CD4-positive, alpha-beta memory T cell (primary cell): ENCODE measurements at regions of chr19 and their contacts with region 1.

Region 1: DNA sequence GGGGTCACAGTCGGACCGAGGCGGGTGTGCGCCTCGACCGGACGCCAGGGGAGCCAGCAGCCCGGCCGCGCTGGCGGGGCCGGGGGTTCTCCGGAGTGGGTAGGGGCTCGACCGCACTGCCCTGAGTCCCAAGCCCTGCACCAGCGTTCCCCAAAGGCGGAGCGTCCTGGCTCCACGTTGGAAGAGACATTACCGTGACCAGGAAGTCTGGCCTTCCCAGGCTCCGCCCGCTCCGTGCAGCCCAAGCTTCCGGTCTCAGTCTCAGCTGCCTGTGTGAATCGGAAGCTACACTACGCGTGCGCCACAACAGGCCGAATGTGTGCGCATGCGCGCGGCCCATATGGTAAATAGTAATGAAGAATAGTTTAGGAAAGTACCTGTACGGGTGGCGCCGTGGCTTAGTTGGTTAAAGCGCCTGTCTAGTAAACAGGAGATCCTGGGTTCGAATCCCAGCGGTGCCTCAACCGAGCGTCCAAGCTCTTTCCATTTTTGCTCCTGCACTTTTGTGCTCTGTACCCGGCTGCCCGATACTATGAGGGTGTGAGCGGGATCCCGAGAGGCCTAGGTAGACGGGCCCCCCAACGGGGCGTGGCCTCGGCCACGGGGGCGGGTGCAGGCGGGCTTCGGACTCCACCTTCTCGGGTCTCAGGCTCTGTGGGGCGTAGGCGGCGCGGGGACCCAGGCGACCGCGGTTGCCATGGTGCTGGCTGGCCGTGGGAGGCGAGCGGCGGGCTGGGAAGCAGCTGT is 17.3 kb upstream of the LRP3 start:
- DNase-seq: peak; percentile 95 to 99 (median 98)
- H3K4me3 ChIP-seq: peak overlapping the region; percentile 71 to 76
- H3K4me3 Mint-ChIP-seq: peak overlapping the region; percentile 95 to 99 (median 98)
- H3K27ac ChIP-seq: peak overlapping the region; percentile 88
- H3K27ac Mint-ChIP-seq: peak overlapping the region; percentile 97 to 100 (median 99)
- H3K4me1 ChIP-seq: peaks cover 41% of the 10 kb centered on the region
- H3K4me1 Mint-ChIP-seq: peaks cover 23 to 60% (median 42%) of the 10 kb centered on the region in 4 donors
- H3K27me3 ChIP-seq: no peaks in the 10 kb centered on the region
- H3K27me3 Mint-ChIP-seq: peaks cover 0 to 4% of the 10 kb centered on the region in 2 donors

Region 2: DNA sequence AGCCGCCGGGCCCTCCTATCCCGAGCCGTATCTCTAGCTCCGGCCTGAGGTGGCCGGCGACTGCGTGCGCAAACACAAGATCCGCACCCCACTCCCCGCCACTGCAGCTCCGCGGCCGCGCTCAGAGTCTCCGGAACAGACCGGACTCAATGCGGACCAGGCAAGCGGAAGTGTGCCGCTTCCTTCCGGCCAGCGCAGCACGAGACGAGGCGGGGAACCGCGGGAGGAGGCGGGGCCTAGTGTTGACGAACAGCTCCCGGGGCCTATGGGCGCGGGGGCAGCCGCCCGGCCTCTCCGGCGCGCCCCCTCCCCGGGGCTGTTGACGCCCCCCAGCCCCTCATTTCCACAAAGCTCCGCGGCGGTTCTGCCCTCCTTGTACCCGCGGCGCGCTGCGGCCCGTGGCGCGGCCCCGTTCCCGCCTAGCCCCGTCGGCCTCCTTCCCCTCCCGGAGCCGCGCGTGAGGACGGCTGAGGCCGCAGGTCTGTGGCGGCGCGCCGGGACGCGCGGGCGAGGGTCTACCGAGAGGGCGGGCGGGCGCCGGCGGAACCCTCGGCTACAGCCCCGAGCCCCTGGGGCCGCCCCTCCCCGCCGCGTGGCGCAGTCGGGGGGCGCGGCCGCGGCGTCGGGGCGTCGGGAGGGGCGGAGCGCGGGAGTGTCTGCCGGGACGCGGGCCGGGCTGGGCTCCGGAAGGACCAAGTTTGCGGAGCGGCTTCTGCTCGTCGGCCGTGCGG is 771.2 kb before region 1 on chr19 and contains the start of gene DPY19L3:
- CTCF ChIA-PET with region 1: no interaction called
- POLR2A ChIA-PET with region 1: no interaction called
- intact Hi-C with region 1: loop called (anchors 2 kb)
- DNase-seq: peak; percentile 79 to 85 (median 83)
- H3K4me3 ChIP-seq: peak within 1 kb of the TSS; percentile 61 to 81
- H3K4me3 Mint-ChIP-seq: peak within 1 kb of the TSS; percentile 85 to 92 (median 88)
- H3K27ac ChIP-seq: peak within 1 kb of the TSS; percentile 50
- H3K27ac Mint-ChIP-seq: peak within 1 kb of the TSS; percentile 82 to 94 (median 90)
- H3K4me1 ChIP-seq: peaks cover 16% of the 10 kb centered on the region
- H3K4me1 Mint-ChIP-seq: peaks cover 5 to 19% (median 11%) of the 10 kb centered on the region in 4 donors
- H3K27me3 ChIP-seq: no peaks in the 10 kb centered on the region
- H3K27me3 Mint-ChIP-seq: no peaks in the 10 kb centered on the region
- total RNA-seq, gene DPY19L3: 16.9 to 17.9 TPM

Region 3: DNA sequence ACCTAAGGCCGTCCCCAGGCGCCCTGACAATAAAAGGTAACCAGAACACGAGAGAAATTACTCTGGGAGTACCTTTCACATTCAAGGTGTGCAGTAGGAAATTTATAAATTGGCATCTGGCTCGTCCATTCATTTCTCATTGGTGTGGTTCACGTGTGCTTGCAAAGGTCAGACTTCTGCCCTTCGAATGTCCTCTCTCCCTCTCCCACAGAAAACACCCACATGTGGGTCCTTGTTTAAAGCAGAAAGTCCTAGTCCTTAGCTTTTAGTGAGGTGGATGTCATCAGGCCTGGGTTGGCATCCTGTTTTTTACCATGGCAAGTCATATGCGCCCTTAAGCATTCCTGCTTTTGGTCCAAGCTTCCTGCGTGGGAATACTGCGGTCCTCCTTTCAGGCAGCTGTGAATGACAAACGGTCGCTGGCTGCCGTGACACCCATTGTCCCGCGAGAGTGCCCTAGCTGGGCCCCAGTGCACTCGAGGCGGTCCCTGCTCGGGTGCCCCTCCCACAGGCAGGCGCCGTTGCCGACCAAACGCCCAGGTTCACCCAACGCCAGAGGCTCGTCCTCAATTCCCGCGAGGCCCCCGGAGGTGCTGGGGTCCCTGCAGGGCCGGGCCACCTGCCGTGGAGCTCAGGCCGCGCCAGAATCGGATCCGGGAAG is 485.4 kb before region 1 on chr19 and contains the start of gene NUDT19:
- CTCF ChIA-PET with region 1: no interaction called
- POLR2A ChIA-PET with region 1: interaction called, 3 read pairs
- intact Hi-C with region 1: loop called (anchors 5 kb)
- DNase-seq: peak; percentile 68 to 79 (median 71)
- H3K4me3 ChIP-seq: peak within 1 kb of the TSS; percentile 85 to 89
- H3K4me3 Mint-ChIP-seq: peak within 1 kb of the TSS; percentile 91 to 94 (median 92)
- H3K27ac ChIP-seq: peak within 1 kb of the TSS; percentile 63
- H3K27ac Mint-ChIP-seq: peak within 1 kb of the TSS; percentile 80 to 96 (median 94)
- H3K4me1 ChIP-seq: peaks cover 45% of the 10 kb centered on the region
- H3K4me1 Mint-ChIP-seq: peaks cover 42 to 50% (median 45%) of the 10 kb centered on the region in 4 donors
- H3K27me3 ChIP-seq: no peaks in the 10 kb centered on the region
- H3K27me3 Mint-ChIP-seq: no peaks in the 10 kb centered on the region
- total RNA-seq, gene NUDT19: 10.5 to 10.6 TPM

Region 4: GRCh38 chr19:33080761-33081681 is 95.8 kb before region 1 on chr19 and contains the start of gene GPATCH1:
- CTCF ChIA-PET with region 1: no interaction called
- POLR2A ChIA-PET with region 1: interaction called, 10 read pairs
- intact Hi-C with region 1: no loop called
- DNase-seq: peak; percentile 83 to 89 (median 85)
- H3K4me3 ChIP-seq: peak within 1 kb of the TSS; percentile 72 to 98
- H3K4me3 Mint-ChIP-seq: peak within 1 kb of the TSS; percentile 92 to 99 (median 96)
- H3K27ac ChIP-seq: peak within 1 kb of the TSS; percentile 75
- H3K27ac Mint-ChIP-seq: peak within 1 kb of the TSS; percentile 89 to 98 (median 95)
- H3K4me1 ChIP-seq: peaks cover 19% of the 10 kb centered on the region
- H3K4me1 Mint-ChIP-seq: peaks cover 17 to 25% (median 18%) of the 10 kb centered on the region in 4 donors
- H3K27me3 ChIP-seq: no peaks in the 10 kb centered on the region
- H3K27me3 Mint-ChIP-seq: no peaks in the 10 kb centered on the region
- total RNA-seq, gene GPATCH1: 15.5 to 16.7 TPM

Region 5: DNA sequence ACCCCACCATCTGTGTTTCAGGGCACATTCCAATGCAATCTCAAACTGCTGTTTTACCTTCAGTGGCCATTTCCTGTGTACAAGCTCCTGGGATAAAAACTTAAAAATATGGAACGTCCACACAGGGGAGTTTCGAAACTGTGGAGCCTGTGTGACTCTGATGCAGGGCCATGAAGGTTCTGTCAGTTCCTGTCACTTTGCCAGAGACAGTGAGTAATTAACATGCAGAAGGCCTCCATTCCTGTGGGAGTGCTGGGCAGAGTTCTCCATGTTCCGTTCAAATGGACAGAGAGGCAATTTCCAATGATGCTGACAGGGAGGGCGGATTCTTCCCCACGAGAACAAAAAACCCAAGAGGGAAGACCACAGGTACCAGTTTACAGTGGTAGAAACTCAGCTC is 20.5 kb before region 1 on chr19:
- CTCF ChIA-PET with region 1: interaction called, 43 read pairs
- POLR2A ChIA-PET with region 1: interaction called, 160 read pairs
- intact Hi-C with region 1: loop called (anchors 1 kb)
- DNase-seq: no peak
- H3K4me3 ChIP-seq: no peak overlapping the region
- H3K4me3 Mint-ChIP-seq: no peak overlapping the region
- H3K27ac ChIP-seq: no peak overlapping the region
- H3K27ac Mint-ChIP-seq: no peak overlapping the region
- H3K4me1 ChIP-seq: peaks cover 29% of the 10 kb centered on the region
- H3K4me1 Mint-ChIP-seq: peaks cover 20 to 37% (median 28%) of the 10 kb centered on the region in 4 donors
- H3K27me3 ChIP-seq: no peaks in the 10 kb centered on the region
- H3K27me3 Mint-ChIP-seq: no peaks in the 10 kb centered on the region

Region 6: DNA sequence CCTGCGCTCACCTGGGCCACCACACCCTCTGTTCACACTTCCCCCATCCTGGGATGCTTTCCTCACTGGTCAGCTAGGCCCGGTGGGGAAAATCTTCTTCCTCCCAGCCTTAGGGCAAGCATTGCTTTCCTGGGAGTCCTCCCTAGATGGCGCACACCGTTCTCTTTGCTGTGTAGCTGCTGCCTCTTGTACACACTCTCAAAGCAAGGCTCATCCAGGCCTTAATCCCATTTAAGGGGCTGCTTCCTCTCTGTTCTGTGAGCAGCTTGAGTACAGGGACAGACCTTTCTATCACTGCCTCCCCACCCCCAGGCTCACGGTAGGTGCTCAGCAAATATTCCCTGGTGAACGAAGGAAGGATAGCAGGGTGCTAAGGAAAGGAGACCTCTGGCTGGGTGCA is 37.8 kb after region 1 on chr19:
- CTCF ChIA-PET with region 1: no interaction called
- POLR2A ChIA-PET with region 1: no interaction called
- intact Hi-C with region 1: no loop called
- DNase-seq: no peak
- H3K4me3 ChIP-seq: no peak overlapping the region
- H3K4me3 Mint-ChIP-seq: no peak overlapping the region
- H3K27ac ChIP-seq: no peak overlapping the region
- H3K27ac Mint-ChIP-seq: no peak overlapping the region
- H3K4me1 ChIP-seq: no peaks in the 10 kb centered on the region
- H3K4me1 Mint-ChIP-seq: peaks cover 0 to 1% (median 0%) of the 10 kb centered on the region in 4 donors
- H3K27me3 ChIP-seq: no peaks in the 10 kb centered on the region
- H3K27me3 Mint-ChIP-seq: peaks cover 0 to 1% of the 10 kb centered on the region in 2 donors

Region 7: DNA sequence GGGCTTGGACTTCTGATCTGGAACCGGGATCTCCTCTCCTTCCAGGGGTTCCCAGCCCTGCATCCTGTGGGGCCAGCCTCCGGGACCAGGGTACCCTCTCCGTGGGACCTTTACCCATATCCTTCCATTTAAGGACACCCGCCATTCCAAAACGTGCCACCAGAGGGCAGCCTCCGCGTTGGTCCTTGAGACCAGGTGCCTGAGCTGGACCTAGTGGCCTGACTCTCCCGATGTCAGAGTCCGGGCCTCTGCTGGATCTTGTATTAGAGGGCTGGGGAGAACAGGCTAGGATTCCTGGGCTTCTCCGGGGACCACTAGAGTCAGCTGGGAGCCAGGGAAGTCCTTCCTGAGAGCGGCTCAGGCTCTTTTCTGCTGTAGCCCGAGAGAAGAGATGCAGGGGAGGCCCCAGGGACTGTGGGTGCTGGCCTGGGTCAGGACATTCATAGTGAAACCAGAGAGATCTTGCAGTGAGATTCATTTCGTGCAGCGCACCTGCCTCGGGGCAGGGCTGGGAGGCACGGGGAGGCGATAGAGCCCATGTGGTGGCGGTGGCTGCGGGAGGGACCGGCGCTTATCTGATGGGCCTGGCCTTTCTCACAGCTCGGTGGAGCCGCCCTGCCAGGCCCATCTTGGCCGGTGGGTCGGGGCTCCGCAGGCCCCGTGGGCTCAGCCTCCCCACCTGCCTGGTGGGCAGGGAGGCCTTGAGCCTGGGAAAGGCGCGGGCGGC is 58.6 kb after region 1 on chr19:
- CTCF ChIA-PET with region 1: interaction called, 17 read pairs
- POLR2A ChIA-PET with region 1: interaction called, 7 read pairs
- intact Hi-C with region 1: loop called (anchors 2 kb)
- DNase-seq: peak; percentile 57 to 74 (median 62)
- H3K4me3 ChIP-seq: peak overlapping the region in 1 of 2 donors; percentile 46
- H3K4me3 Mint-ChIP-seq: peak overlapping the region; percentile 77 to 88 (median 84)
- H3K27ac ChIP-seq: no peak overlapping the region
- H3K27ac Mint-ChIP-seq: peak overlapping the region in 4 of 7 donors; percentile 51 to 77 (median 67)
- H3K4me1 ChIP-seq: peaks cover 8% of the 10 kb centered on the region
- H3K4me1 Mint-ChIP-seq: peaks cover 4 to 22% (median 5%) of the 10 kb centered on the region in 4 donors
- H3K27me3 ChIP-seq: no peaks in the 10 kb centered on the region
- H3K27me3 Mint-ChIP-seq: peaks cover 7 to 9% of the 10 kb centered on the region in 2 donors

Region 8: DNA sequence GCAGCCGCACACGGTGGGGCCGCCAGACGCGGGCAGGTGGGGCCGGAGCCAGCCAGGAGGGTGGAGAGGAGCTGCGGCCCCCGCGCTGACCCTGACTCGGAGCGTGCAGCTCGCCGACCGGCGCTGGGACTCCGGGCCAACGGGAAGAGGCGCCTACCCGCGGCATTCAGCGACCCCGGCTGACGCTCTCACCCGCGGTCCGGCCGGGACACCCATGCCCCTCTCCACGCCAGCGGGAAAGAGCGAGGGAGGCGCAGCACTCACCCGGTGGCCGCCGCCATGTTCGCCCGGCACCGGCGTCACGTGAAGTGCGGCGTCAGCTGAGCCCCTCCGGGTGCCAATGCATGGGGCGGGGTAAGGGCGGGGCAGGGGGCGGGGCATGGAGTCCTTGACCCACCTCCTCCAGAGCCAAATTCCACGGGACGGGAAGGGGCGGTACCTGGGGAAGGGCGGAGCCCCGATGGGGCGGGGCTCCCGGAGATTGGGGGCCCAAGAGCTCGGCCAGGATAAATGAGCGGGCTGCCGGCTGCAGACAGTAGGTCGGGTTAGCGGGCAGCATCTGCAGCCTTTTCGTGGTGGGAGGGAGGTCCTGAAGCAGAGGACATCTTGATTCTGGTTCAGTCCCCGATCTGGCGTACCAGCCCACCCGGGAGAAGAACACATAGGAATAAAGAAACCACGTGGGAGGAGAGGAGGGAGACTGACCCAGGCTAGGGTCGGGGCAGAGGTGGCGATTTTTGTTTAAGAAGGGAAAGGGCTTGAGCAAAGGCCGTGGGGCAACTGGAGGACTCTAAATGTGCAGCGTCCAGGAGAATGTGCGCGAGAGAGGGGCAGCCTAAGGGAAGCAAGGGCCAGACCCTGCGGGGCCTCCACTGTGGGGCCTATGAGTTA is 344.9 kb after region 1 on chr19 and contains the start of gene PEPD:
- CTCF ChIA-PET with region 1: no interaction called
- POLR2A ChIA-PET with region 1: interaction called, 5 read pairs
- intact Hi-C with region 1: loop called (anchors 1 kb)
- DNase-seq: peak; percentile 62 to 74 (median 72)
- H3K4me3 ChIP-seq: peak within 1 kb of the TSS; percentile 72 to 85
- H3K4me3 Mint-ChIP-seq: peak within 1 kb of the TSS; percentile 78 to 92 (median 87)
- H3K27ac ChIP-seq: peak within 1 kb of the TSS; percentile 53
- H3K27ac Mint-ChIP-seq: peak within 1 kb of the TSS; percentile 47 to 95 (median 90)
- H3K4me1 ChIP-seq: peaks cover 24% of the 10 kb centered on the region
- H3K4me1 Mint-ChIP-seq: peaks cover 15 to 36% (median 23%) of the 10 kb centered on the region in 4 donors
- H3K27me3 ChIP-seq: no peaks in the 10 kb centered on the region
- H3K27me3 Mint-ChIP-seq: no peaks in the 10 kb centered on the region
- total RNA-seq, gene PEPD: 27.6 to 35.1 TPM